HEK293T (cell line): ENCODE measurements at regions of chr5 and their contacts with region 1.

Region 1: GRCh38 chr5:178461004-178461730 is 129.0 kb downstream of the COL23A1 start:
- DNase-seq: peak; percentile 92

Region 2: DNA sequence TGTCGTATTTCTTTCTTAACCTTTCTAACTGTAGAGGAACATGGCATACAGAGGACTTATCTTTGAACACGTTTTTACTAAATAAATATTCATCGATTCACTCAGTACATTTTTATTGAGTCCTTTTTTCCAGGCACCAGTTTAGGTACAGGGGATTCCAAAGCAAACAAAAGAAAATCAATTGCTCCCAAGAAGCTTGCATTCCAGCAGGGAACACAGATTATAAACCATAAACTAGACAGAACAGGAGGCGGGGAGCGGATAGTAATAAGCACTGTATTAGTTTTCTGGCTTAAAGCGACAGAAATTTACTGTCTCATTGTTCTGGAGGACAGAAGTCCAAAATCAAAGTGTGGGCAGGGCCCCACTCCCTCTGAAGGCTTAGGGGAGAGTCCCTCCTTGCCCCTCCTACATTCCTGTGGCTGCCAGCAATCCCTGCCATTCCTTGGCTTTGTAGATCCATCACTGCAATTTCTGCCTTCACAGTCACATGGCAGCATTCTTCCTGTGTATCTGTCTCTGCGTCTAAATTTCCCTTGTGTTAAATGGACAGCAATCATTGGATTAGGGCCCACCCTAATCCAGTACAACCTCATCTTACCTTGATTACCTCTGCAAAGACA is 13.5 kb after region 1 on chr5:
- CTCF ChIA-PET with region 1: interaction called, 32 read pairs
- POLR2A ChIA-PET with region 1: no interaction called
- DNase-seq: no peak

Region 3: GRCh38 chr5:178582291-178582690 is 121.1 kb after region 1 on chr5:
- CTCF ChIA-PET with region 1: no interaction called
- POLR2A ChIA-PET with region 1: no interaction called
- DNase-seq: no peak